Spleen (tissue), 13 donors: ENCODE measurements at regions of chr1 and their contacts with region 1.

Region 1: GRCh38 chr1:64136752-64137411 is 66.5 kb upstream of the UBE2U start:
- DNase-seq: no peak
- H3K4me3 ChIP-seq: no peak overlapping the region
- H3K27ac ChIP-seq: no peak overlapping the region
- H3K4me1 ChIP-seq: peaks cover 0 to 21% (median 0%) of the 10 kb centered on the region in 6 donors
- H3K27me3 ChIP-seq: no peaks in the 10 kb centered on the region
- CTCF ChIP-seq: peak; percentile 74 to 89 (median 83)
- POLR2A ChIP-seq: no peak

Region 2: GRCh38 chr1:63615768-63616420 is 521.0 kb before region 1 on chr1:
- intact Hi-C with region 1: loop called (anchors 5 kb)
- DNase-seq: no peak
- H3K4me3 ChIP-seq: no peak overlapping the region
- H3K27ac ChIP-seq: no peak overlapping the region
- H3K4me1 ChIP-seq: peaks cover 0 to 22% (median 8%) of the 10 kb centered on the region in 6 donors
- H3K27me3 ChIP-seq: no peaks in the 10 kb centered on the region
- CTCF ChIP-seq: peak; percentile 73 to 94 (median 89)
- POLR2A ChIP-seq: no peak

Region 3: DNA sequence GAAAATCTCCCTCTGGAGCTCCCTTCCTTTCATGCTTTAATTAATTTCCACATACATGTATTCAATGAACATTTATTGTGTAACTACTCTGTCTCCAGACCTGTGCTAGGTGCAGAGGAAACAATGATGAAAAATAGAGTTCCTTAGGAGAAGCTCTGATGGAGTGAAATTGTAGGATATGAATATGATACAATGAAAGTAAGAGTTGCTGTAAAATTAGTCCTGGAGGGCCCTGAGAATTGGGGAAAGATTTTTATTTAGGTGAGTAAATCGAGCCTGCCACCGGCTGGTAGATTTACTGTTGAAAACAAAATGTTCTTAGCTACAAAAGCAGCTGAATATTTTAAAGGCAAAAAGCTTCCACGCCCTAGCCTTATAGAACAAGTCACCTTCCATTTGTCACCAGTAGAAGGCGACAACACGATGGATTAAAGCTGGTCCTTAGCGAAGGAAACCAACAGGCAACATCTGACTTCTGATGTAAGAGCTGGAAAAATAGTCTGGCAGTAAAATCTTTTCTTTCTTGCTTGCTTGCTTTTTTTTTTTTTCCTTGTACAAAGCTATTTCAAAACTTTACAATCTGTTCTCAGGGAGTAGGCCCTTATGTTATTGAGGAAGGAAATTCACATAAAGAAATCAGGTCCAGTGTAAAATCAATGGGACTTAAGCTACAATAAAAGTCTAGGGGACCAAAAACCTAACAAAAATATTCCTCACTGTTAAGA is 445.0 kb before region 1 on chr1:
- intact Hi-C with region 1: loop called (anchors 5 kb)
- DNase-seq: no peak
- H3K4me3 ChIP-seq: no peak overlapping the region
- H3K27ac ChIP-seq: no peak overlapping the region
- H3K4me1 ChIP-seq: peaks cover 0 to 14% (median 4%) of the 10 kb centered on the region in 6 donors
- H3K27me3 ChIP-seq: no peaks in the 10 kb centered on the region
- CTCF ChIP-seq: peak; percentile 23 to 77 (median 67)
- POLR2A ChIP-seq: no peak

Region 4: GRCh38 chr1:63773815-63774616 is 362.9 kb before region 1 on chr1 and contains the start of gene ROR1:
- intact Hi-C with region 1: loop called (anchors 5 kb)
- DNase-seq: peak; percentile 92
- H3K4me3 ChIP-seq: peak within 1 kb of the TSS; percentile 58 to 84 (median 64)
- H3K27ac ChIP-seq: peak within 1 kb of the TSS; percentile 53 to 86 (median 82)
- H3K4me1 ChIP-seq: peaks cover 0 to 37% (median 27%) of the 10 kb centered on the region in 6 donors
- H3K27me3 ChIP-seq: peaks cover 0 to 62% (median 26%) of the 10 kb centered on the region in 7 donors
- CTCF ChIP-seq: peak in 10 of 11 experiments; percentile 31 to 81 (median 70)
- POLR2A ChIP-seq: no peak
- total RNA-seq, gene ROR1: 4.6 to 12.3 (median 8.2) TPM

Region 5: DNA sequence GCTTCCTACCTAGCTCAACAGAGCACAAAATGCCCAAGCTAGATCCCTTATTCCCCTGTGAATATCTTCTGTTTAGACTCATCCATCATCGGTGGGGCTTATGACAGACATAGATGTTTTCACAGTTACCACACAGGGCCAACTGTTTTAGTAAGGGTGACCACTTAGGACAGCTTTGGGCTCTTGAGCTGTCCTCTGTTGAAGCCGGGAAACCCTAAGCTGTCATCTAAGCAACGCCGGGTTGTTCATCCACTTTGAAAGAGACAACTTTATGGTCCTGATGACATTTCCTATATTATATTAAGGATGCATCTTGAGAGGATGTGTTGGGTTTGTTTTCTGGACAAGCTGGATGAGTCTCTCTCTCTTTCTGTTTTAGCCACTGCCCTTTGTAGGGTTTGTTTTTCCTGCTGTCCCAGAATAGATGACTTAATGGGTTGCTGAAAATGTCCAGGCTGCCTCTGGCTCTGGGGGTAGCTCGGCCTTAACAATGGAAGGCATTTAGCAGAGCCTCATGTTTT is 44.0 kb before region 1 on chr1:
- intact Hi-C with region 1: no loop called
- DNase-seq: no peak
- H3K4me3 ChIP-seq: no peak overlapping the region
- H3K27ac ChIP-seq: no peak overlapping the region
- H3K4me1 ChIP-seq: no peaks in the 10 kb centered on the region
- H3K27me3 ChIP-seq: no peaks in the 10 kb centered on the region
- CTCF ChIP-seq: no peak
- POLR2A ChIP-seq: no peak